ENCODE measurements at regions of chr5 and their contacts with region 1.

Region 1: DNA sequence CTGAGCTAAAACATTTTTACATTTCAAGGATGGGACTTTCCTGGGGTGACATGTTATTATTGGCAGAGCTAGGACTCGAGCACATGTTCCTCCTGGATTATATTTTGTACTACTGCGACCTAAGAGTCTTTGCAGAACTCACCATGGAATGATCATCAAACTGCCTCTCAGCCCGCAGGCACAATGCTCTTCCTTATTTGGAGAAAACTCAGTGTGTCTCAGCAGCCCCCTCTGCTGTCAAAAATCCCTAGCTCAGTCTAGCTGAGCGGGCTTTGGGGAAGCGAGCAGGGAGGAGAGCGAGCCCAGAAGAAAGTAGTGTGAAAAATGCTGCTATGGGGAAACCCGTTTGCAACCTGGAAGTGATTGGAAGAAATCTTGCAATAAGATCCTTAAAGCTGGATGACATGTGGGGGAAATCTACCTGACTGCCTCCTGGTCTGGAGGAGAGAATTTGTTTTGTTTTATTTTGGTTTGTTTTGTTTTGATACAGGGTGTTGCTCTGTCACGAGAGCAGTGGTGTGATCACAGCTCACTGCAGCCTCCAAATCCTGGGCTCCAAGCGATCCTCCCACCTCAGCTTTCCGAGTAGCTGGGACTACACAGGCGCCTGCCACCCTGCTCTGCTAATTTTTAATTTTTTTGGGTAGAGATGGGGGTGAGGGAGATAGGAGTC is 89.9 kb upstream of the CLINT1 start:
- DNase-seq: peak; percentile 79

Region 2: DNA sequence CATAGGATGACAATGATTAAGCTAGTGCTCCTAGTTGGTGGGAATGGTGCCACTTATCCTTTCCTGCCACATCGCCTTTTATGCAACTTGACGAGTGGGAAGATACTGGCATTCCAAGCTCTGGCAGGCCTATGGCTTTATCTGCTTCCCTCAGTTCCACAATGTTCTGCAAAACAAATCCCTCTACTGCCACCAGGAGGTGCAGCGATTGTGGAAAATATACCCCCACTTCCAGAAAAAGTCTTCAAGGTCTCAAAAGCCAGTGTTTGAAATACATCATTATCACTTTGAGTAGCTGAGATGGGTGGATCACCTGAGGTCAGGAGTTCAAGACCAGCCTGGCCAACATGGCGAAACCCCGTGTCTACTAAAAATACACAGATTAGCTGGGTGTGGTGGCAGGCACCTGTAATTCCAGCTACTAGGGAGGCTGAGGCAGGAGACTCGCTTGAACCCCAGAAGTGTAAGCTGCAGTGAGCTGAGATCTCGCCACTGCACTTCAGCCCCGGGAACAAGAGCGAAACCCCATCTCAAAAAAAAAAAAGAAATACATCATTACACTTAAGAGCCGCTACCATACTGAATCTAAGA is 93.4 kb before region 1 on chr5:
- CTCF ChIA-PET with region 1: interaction called, 13 read pairs
- POLR2A ChIA-PET with region 1: no interaction called
- DNase-seq: peak; percentile 57

Region 3: GRCh38 chr5:157961828-157962590 is 13.1 kb after region 1 on chr5:
- CTCF ChIA-PET with region 1: interaction called, 14 read pairs
- POLR2A ChIA-PET with region 1: interaction called, 3 read pairs
- DNase-seq: no peak

Region 4: DNA sequence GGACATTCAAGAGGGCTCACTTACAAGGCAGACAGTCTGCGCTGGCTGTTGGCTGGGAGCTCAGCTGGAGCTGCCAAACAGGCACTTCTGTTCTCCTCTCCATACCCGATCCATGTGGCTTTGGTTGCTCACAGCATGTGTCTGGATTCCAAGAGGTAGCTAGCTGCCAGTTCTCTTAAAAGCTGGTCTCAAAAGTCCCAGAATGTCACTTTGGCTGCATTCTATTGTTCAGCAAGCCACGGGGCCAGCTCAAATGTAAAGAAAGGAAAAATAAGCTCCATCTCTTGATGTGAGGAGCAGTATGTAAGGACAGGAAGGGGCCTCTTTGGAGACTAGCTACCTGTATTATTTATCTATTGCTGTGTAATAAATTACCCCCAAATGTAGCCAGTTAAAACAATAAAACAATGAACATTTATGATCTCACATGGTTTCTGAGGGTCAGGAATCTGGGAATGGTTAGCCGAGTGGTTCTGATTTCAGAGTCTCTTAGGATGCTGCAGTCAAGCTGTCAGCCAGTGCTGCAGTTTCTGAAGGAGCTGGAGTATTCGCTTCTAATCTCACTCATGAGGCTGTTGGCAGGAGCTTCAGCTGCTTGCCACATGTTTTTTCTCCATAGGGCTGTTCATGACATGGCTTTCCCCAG is 22.8 kb after region 1 on chr5:
- CTCF ChIA-PET with region 1: interaction called, 14 read pairs
- POLR2A ChIA-PET with region 1: no interaction called
- DNase-seq: peak; percentile 13